Activated naive CD4-positive, alpha-beta T cell treated with anti-CD3 and anti-CD28 coated beads for 36 hours (primary cell): ENCODE measurements at regions of chr9 and their contacts with region 1.

Region 1: GRCh38 chr9:123225374-123225813 is 43.0 kb downstream of the STRBP start:
- DNase-seq: peak; percentile 82
- H3K4me3 Mint-ChIP-seq: no peak overlapping the region
- H3K27ac Mint-ChIP-seq: peak overlapping the region; percentile 74
- H3K4me1 Mint-ChIP-seq: peaks cover 31% of the 10 kb centered on the region
- H3K27me3 Mint-ChIP-seq: no peaks in the 10 kb centered on the region

Region 2: GRCh38 chr9:122810306-122810946 is 415.0 kb before region 1 on chr9:
- CTCF ChIA-PET with region 1: no interaction called
- intact Hi-C with region 1: loop called (anchors 10 kb)
- DNase-seq: peak; percentile 87
- H3K4me3 Mint-ChIP-seq: no peak overlapping the region
- H3K27ac Mint-ChIP-seq: no peak overlapping the region
- H3K4me1 Mint-ChIP-seq: peaks cover 20% of the 10 kb centered on the region
- H3K27me3 Mint-ChIP-seq: no peaks in the 10 kb centered on the region

Region 3: GRCh38 chr9:122991370-122991830 is 234.0 kb before region 1 on chr9:
- CTCF ChIA-PET with region 1: no interaction called
- intact Hi-C with region 1: loop called (anchors 2 kb)
- DNase-seq: peak; percentile 49
- H3K4me3 Mint-ChIP-seq: no peak overlapping the region
- H3K27ac Mint-ChIP-seq: no peak overlapping the region
- H3K4me1 Mint-ChIP-seq: peaks cover 7% of the 10 kb centered on the region
- H3K27me3 Mint-ChIP-seq: no peaks in the 10 kb centered on the region

Region 4: GRCh38 chr9:123119566-123119965 is 105.8 kb before region 1 on chr9:
- CTCF ChIA-PET with region 1: no interaction called
- intact Hi-C with region 1: loop called (anchors 5 kb)
- DNase-seq: no peak
- H3K4me3 Mint-ChIP-seq: no peak overlapping the region
- H3K27ac Mint-ChIP-seq: no peak overlapping the region
- H3K4me1 Mint-ChIP-seq: peaks cover 10% of the 10 kb centered on the region
- H3K27me3 Mint-ChIP-seq: no peaks in the 10 kb centered on the region

Region 5: GRCh38 chr9:123138163-123138562 is 87.2 kb before region 1 on chr9:
- CTCF ChIA-PET with region 1: no interaction called
- intact Hi-C with region 1: no loop called
- DNase-seq: no peak
- H3K4me3 Mint-ChIP-seq: no peak overlapping the region
- H3K27ac Mint-ChIP-seq: no peak overlapping the region
- H3K4me1 Mint-ChIP-seq: no peaks in the 10 kb centered on the region
- H3K27me3 Mint-ChIP-seq: no peaks in the 10 kb centered on the region

Region 6: GRCh38 chr9:123268240-123268949 is 43.0 kb after region 1 on chr9 and contains the start of gene STRBP:
- CTCF ChIA-PET with region 1: interaction called, 7 read pairs
- intact Hi-C with region 1: loop called (anchors 1 kb)
- DNase-seq: peak; percentile 90
- H3K4me3 Mint-ChIP-seq: peak within 1 kb of the TSS; percentile 74
- H3K27ac Mint-ChIP-seq: no peak within 1 kb of the TSS
- H3K4me1 Mint-ChIP-seq: peaks cover 28% of the 10 kb centered on the region
- H3K27me3 Mint-ChIP-seq: no peaks in the 10 kb centered on the region
- total RNA-seq, gene STRBP: 27.6 to 27.8 TPM

Region 7: GRCh38 chr9:123322273-123323195 is 97.1 kb after region 1 on chr9:
- CTCF ChIA-PET with region 1: no interaction called
- intact Hi-C with region 1: loop called (anchors 1 kb)
- DNase-seq: peak; percentile 84
- H3K4me3 Mint-ChIP-seq: peak overlapping the region; percentile 25
- H3K27ac Mint-ChIP-seq: peak overlapping the region; percentile 80
- H3K4me1 Mint-ChIP-seq: peaks cover 31% of the 10 kb centered on the region
- H3K27me3 Mint-ChIP-seq: no peaks in the 10 kb centered on the region

Region 8: DNA sequence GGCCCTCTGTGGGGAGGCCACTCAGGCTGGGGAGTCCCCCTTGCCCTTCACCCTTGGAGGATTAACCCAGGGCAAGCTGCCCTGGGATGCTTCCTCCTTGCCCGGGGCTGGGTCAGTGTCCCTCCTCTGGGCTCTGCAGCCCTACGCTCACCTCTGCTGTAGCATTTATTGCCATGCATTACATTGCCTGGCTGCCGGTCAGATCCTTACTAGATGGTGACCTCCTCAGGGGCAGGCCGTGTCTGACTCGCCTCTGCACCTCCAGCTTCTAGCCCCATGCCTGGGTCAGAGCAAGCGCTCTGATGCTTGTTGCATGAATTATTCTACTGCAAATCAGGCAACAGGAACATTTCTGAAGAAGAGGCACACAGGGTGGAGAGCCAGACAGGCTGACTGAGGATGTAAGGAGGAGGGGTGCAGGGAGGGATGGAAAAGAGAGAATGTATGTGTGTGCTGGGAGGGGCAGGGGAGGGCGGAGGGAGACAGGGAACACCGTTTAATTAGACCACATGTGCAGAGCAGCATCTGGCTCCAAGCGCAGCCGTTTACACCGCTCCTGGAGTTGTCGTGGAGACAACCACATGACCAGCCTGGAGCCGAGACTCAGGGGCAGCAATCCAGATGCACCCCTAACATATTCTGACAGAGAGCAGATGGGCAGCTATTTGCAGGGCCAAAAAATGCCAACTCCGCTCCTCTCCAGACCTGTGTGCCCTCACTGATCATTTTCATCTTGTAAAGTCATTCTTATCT is 247.6 kb after region 1 on chr9:
- CTCF ChIA-PET with region 1: no interaction called
- intact Hi-C with region 1: no loop called
- DNase-seq: no peak
- H3K4me3 Mint-ChIP-seq: no peak overlapping the region
- H3K27ac Mint-ChIP-seq: no peak overlapping the region
- H3K4me1 Mint-ChIP-seq: no peaks in the 10 kb centered on the region
- H3K27me3 Mint-ChIP-seq: no peaks in the 10 kb centered on the region